ENCODE measurements at regions of chr7 and their contacts with region 1.

Region 1: DNA sequence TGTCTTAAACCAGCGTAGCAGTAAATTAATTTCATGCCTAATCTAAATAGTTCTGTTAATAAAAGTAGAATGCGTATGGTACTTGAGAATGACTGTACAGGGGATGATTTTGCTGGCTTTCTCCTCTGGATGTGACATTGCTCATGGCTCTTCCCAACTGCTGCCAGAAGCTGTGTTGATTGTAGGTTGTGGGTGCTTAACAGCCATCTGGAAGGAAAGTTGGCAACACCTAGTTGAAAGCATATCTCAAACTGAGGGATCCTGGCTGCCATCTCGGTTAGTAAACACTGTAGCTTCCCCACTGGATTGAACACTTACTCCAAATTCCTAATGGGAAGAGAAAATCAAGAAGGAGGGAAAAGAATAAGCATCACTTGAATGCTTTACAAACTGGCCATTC is 130.9 kb downstream of the NXPH1 start:
- DNase-seq: no peak

Region 2: DNA sequence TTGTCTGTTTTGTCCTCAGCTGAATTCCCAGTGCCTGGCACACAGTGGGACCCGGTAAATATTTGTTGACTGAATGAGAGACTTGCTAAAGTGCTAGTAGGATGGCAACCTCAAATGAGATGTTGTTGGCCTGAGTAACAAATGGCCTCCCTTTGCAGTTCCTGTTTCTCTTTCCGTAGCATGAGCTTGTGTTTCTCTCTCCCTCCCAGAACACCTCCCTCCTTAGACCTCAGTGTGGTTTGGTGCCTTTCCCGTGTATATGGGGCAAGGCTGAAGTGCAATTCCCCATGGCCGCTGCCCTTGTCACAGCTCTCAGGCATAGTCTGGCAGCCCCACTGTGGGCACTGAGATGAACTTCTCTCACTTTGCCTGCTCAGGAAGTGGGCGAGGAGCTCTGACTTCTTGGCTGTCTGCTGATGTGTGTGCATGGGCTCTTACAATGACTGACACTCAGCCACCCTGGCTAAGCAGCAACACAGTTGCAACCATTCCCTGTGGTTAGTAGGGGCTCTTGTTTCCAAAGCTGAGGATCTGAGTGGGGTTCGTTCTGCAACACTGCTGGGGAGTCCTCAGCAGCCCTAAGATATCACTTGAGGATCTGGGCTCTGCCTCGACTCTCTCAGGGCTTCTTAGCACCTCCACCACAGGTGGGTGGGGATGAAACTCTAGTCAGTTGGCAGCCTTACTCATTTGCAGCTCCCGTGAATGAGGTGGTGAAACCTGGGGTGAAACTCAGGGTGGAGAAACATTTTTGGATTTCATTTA is 438.4 kb before region 1 on chr7:
- intact Hi-C with region 1: no loop called
- DNase-seq: no peak

Region 3: GRCh38 chr7:9181356-9181755 is 617.1 kb after region 1 on chr7:
- intact Hi-C with region 1: loop called in 1 of 2 experiments (anchors 5 kb)
- DNase-seq: no peak